Dorsolateral prefrontal cortex (tissue), 120 donors: ENCODE measurements at regions of chr4 and their contacts with region 1.

Region 1: GRCh38 chr4:147866532-147867271 is 134.8 kb downstream of the ARHGAP10 start:
- DNase-seq: peak; percentile 85 to 98 (median 92)
- H3K4me3 ChIP-seq: no peak overlapping the region
- H3K27ac ChIP-seq: peak overlapping the region in 7 of 59 donors; percentile 1 to 54 (median 46)
- H3K27me3 ChIP-seq: no peaks in the 10 kb centered on the region
- CTCF ChIP-seq: peak; percentile 98 to 100 (median 100)

Region 2: GRCh38 chr4:147019061-147019460 is 847.6 kb before region 1 on chr4:
- intact Hi-C with region 1: loop called in 1 of 2 experiments (anchors 5 kb)
- DNase-seq: peak in 7 of 10 donors; percentile 11 to 85 (median 65)
- H3K4me3 ChIP-seq: no peak overlapping the region
- H3K27ac ChIP-seq: no peak overlapping the region
- H3K27me3 ChIP-seq: no peaks in the 10 kb centered on the region
- CTCF ChIP-seq: peak; percentile 19 to 92 (median 72)

Region 3: DNA sequence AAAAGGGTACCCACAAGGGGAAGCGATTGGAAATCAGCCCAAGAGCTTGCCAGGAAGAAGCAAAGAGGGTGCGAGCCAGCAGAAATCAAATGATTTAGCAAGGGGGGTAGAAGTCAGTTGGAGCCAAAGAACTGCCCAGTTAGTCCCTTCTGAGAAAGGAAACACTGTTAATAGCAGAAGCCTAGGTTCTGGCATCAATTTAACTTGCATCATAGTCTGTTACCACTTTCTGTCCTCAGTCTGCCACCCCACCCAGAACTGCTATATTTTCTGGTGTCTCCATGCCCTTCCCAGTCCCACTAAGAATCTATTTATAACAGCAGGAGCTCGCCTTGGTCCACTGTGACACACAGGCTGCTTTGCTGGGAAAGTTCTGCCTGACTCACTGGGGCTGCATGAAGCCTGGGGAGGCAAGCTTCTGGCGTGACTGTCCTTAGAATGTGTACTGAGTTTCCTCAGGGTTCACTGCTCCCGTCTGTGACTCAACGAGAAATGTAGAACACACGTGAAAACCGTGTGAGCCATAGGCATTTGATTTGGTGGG is 763.2 kb before region 1 on chr4:
- intact Hi-C with region 1: loop called in 1 of 2 experiments (anchors 5 kb)
- DNase-seq: peak in 4 of 10 donors; percentile 14 to 52 (median 38)
- H3K4me3 ChIP-seq: no peak overlapping the region
- H3K27ac ChIP-seq: peak overlapping the region in 16 of 59 donors; percentile 1 to 63 (median 22)
- H3K27me3 ChIP-seq: no peaks in the 10 kb centered on the region
- CTCF ChIP-seq: no peak

Region 4: GRCh38 chr4:147617173-147617840 is 249.4 kb before region 1 on chr4 and contains the start of gene TMEM184C:
- intact Hi-C with region 1: loop called in 1 of 2 experiments (anchors 10 kb)
- DNase-seq: peak; percentile 97 to 99 (median 98)
- H3K4me3 ChIP-seq: peak within 1 kb of the TSS; percentile 62 to 99 (median 90)
- H3K27ac ChIP-seq: peak within 1 kb of the TSS in 57 of 59 donors; percentile 12 to 92 (median 78)
- H3K27me3 ChIP-seq: no peaks in the 10 kb centered on the region
- CTCF ChIP-seq: peak in 28 of 56 donors; percentile 4 to 52 (median 30)
- total RNA-seq, gene TMEM184C: 24.9 to 69.1 (median 35.0) TPM

Region 5: DNA sequence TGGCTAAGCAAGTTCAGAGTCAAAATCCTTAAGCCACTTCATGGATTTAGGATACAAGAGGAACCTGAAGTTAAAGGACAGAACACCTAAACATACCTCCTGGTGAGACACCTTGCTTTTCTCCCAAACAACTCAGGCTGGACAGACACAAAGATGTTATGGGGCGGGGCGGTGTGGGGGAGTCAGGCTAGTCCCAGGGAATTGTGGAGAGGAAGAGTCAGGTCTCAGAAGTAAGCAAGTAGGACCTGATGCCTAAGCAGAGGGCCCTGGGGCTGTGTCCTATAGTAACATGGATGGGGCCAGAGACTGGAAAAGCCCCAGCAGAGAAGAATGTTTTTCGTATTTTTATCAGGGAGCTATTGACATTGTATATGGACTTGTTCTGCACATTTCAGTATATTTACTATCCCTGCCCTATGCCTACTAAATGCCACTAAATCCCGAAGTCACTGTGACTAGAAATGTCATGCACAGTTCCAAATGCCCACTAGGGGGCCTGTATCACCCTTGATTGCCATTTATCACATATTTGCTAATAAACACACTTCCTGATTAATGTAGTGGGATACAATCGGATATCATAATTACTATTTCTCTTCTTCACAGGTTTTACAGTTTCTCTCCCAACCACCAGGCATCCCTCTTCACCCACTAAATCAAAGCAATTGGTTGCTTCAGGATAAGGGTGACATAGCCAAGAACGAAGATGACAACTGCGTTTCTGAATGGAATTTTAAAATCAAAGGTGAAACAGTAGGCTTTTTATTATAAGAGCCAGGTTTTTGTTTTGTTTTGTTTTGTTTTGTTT is 158.6 kb before region 1 on chr4:
- intact Hi-C with region 1: loop called (anchors 1 kb)
- DNase-seq: peak in 3 of 10 donors; percentile 22 to 62 (median 53)
- H3K4me3 ChIP-seq: peak overlapping the region in 5 of 59 donors; percentile 11 to 37 (median 20)
- H3K27ac ChIP-seq: no peak overlapping the region
- H3K27me3 ChIP-seq: no peaks in the 10 kb centered on the region
- CTCF ChIP-seq: peak; percentile 65 to 91 (median 84)